Activated CD4-positive, alpha-beta T cell treated with anti-CD3 and anti-CD28 coated beads, Interleukin-2, amount 10 ng/mL, durations not matched to agents 24 days and 14 days (primary cell): ENCODE measurements at regions of chr21 and their contacts with region 1.

Region 1: GRCh38 chr21:15034126-15034853 is 30.5 kb downstream of the NRIP1 start:
- DNase-seq: no peak
- H3K4me3 Mint-ChIP-seq: peak overlapping the region; percentile 13
- H3K27ac Mint-ChIP-seq: peak overlapping the region; percentile 51
- H3K4me1 Mint-ChIP-seq: peaks cover 7% of the 10 kb centered on the region
- H3K27me3 Mint-ChIP-seq: no peaks in the 10 kb centered on the region

Region 2: GRCh38 chr21:15057285-15057684 is 23.0 kb after region 1 on chr21:
- intact Hi-C with region 1: loop called (anchors 2 kb)
- DNase-seq: peak; percentile 63
- H3K4me3 Mint-ChIP-seq: peak overlapping the region; percentile 20
- H3K27ac Mint-ChIP-seq: no peak overlapping the region
- H3K4me1 Mint-ChIP-seq: peaks cover 60% of the 10 kb centered on the region
- H3K27me3 Mint-ChIP-seq: peaks cover 5% of the 10 kb centered on the region

Region 3: DNA sequence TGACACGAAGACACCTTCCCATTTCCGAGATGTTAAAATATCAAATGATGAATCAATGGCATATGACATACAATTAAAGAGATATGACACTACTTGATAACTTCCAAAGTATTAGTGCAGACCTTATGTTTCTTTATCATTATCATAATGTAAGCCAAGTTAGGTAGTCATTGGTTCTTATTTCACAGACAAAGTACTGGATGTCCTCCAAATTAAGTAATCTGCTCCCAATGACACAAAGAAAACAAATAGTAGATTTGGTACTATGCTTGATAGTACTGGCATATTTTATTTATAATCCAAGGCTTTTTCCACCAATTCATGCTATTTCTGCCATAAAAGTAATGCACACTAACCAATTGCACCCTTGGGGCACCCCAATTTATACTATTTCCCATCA is 42.4 kb after region 1 on chr21:
- intact Hi-C with region 1: no loop called
- DNase-seq: no peak
- H3K4me3 Mint-ChIP-seq: no peak overlapping the region
- H3K27ac Mint-ChIP-seq: no peak overlapping the region
- H3K4me1 Mint-ChIP-seq: no peaks in the 10 kb centered on the region
- H3K27me3 Mint-ChIP-seq: peaks cover 13% of the 10 kb centered on the region

Region 4: GRCh38 chr21:15095326-15095725 is 61.0 kb after region 1 on chr21:
- intact Hi-C with region 1: no loop called
- DNase-seq: no peak
- H3K4me3 Mint-ChIP-seq: no peak overlapping the region
- H3K27ac Mint-ChIP-seq: no peak overlapping the region
- H3K4me1 Mint-ChIP-seq: no peaks in the 10 kb centered on the region
- H3K27me3 Mint-ChIP-seq: no peaks in the 10 kb centered on the region

Region 5: GRCh38 chr21:15252431-15252830 is 218.1 kb after region 1 on chr21:
- intact Hi-C with region 1: no loop called
- DNase-seq: no peak
- H3K4me3 Mint-ChIP-seq: no peak overlapping the region
- H3K27ac Mint-ChIP-seq: no peak overlapping the region
- H3K4me1 Mint-ChIP-seq: no peaks in the 10 kb centered on the region
- H3K27me3 Mint-ChIP-seq: no peaks in the 10 kb centered on the region